T-cell (primary cell): ENCODE measurements at regions of chr6 and their contacts with region 1.

Region 1: DNA sequence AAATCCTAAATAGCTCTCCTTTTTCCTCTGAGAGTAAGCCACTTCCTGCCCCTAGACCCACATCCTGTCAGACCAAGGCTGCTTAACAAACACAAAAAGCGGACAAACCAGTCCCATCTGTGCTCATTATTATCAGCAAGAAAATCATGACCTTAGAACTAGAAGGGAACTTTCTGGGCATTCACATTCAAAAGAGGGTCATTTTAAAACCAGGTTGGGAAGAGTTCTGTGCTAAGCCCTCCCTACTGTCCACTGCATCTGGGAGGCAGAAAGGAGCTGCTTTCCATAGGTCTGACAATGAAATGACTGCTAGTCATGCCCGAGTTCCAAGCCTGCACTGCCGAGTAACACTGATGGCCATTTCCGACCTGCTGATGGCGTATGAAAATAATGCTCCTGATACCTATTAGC is 15.4 kb downstream of the EZR start:
- DNase-seq: peak in 29 of 35 experiments; percentile 19 to 72 (median 41)
- ATAC-seq: peak; percentile 43 to 86 (median 78)
- H3K4me3 ChIP-seq: peak overlapping the region in 1 of 2 donors; percentile 31
- H3K4me3 Mint-ChIP-seq: peak overlapping the region; percentile 70 to 79 (median 76)
- H3K27ac ChIP-seq: peak overlapping the region; percentile 78
- H3K27ac Mint-ChIP-seq: peak overlapping the region; percentile 90 to 91
- H3K4me1 ChIP-seq: peaks cover 35 to 72% of the 10 kb centered on the region in 2 experiments
- H3K4me1 Mint-ChIP-seq: peaks cover 93 to 100% (median 96%) of the 10 kb centered on the region in 3 donors
- H3K27me3 ChIP-seq: no peaks in the 10 kb centered on the region
- H3K27me3 Mint-ChIP-seq: no peaks in the 10 kb centered on the region

Region 2: DNA sequence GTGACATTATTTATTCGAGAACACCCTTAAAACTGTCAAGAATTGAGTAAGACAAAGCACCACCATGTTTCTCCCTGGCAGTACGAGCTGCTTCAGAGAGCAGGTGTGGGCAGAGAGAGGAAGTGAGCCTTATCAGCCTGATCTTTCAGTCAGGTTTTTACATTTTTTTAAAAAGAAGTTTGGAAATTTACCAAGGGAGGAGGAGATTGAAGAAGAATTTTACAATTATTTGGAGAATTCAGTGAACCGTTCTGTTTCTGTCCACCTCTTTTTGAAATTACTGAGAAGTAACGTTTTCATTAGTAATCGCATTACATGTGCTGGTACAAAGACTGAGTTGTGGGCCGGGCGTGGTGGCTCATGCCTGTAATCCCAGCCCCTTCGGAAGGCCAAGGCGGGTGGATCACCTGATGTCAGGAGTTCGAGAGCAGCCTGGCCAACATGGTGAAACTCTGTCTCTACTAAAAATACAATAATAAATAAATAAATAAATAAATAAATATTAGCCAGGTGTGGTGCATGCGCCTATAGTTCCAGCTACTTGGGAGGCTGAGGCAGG is 1347.1 kb before region 1 on chr6:
- CTCF ChIA-PET with region 1: no interaction called
- POLR2A ChIA-PET with region 1: no interaction called
- DNase-seq: peak in 4 of 35 experiments; percentile 6 to 27 (median 11)
- ATAC-seq: peak in 2 of 4 experiments; percentile 55 to 58
- H3K4me3 ChIP-seq: no peak overlapping the region
- H3K4me3 Mint-ChIP-seq: peak overlapping the region in 1 of 3 donors; percentile 53
- H3K27ac ChIP-seq: no peak overlapping the region
- H3K27ac Mint-ChIP-seq: no peak overlapping the region
- H3K4me1 ChIP-seq: peaks cover 7 to 24% of the 10 kb centered on the region in 2 experiments
- H3K4me1 Mint-ChIP-seq: peaks cover 15 to 28% (median 21%) of the 10 kb centered on the region in 3 donors
- H3K27me3 ChIP-seq: no peaks in the 10 kb centered on the region
- H3K27me3 Mint-ChIP-seq: no peaks in the 10 kb centered on the region

Region 3: GRCh38 chr6:157908369-157909281 is 895.1 kb before region 1 on chr6:
- CTCF ChIA-PET with region 1: no interaction called
- POLR2A ChIA-PET with region 1: no interaction called
- DNase-seq: no peak
- ATAC-seq: peak in 1 of 4 experiments; percentile 9
- H3K4me3 ChIP-seq: no peak overlapping the region
- H3K4me3 Mint-ChIP-seq: no peak overlapping the region
- H3K27ac ChIP-seq: no peak overlapping the region
- H3K27ac Mint-ChIP-seq: no peak overlapping the region
- H3K4me1 ChIP-seq: no peaks in the 10 kb centered on the region
- H3K4me1 Mint-ChIP-seq: peaks cover 3 to 10% (median 7%) of the 10 kb centered on the region in 3 donors
- H3K27me3 ChIP-seq: no peaks in the 10 kb centered on the region
- H3K27me3 Mint-ChIP-seq: no peaks in the 10 kb centered on the region

Region 4: GRCh38 chr6:158697811-158698210 is 105.9 kb before region 1 on chr6:
- CTCF ChIA-PET with region 1: interaction called in 1 of 2 experiments, 4 read pairs
- POLR2A ChIA-PET with region 1: interaction called in 1 of 2 experiments, 10 read pairs
- DNase-seq: no peak
- ATAC-seq: no peak
- H3K4me3 ChIP-seq: no peak overlapping the region
- H3K4me3 Mint-ChIP-seq: no peak overlapping the region
- H3K27ac ChIP-seq: no peak overlapping the region
- H3K27ac Mint-ChIP-seq: no peak overlapping the region
- H3K4me1 ChIP-seq: peaks cover 0 to 6% of the 10 kb centered on the region in 2 experiments
- H3K4me1 Mint-ChIP-seq: peaks cover 0 to 10% (median 5%) of the 10 kb centered on the region in 3 donors
- H3K27me3 ChIP-seq: no peaks in the 10 kb centered on the region
- H3K27me3 Mint-ChIP-seq: no peaks in the 10 kb centered on the region

Region 5: DNA sequence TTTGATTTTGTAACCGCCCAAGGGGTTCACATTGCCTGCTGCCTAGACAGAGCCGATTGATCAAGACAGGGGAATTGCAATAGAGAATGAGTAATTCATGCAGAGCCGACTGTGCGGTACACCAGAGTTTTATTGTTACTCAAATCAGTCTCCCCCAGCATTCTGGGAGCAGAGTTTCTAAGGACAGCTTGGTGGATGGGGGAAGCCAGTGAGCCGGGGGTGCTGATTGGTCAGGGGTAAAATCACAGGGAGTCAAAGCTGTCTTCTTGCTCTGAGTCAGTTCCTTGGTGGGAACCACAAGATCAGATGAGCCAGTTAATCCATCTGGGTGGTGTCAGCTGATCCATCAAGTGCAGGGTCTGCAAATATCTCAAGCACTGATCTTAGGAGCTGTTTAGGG is 75.4 kb after region 1 on chr6:
- CTCF ChIA-PET with region 1: no interaction called
- POLR2A ChIA-PET with region 1: interaction called in 1 of 2 experiments, 11 read pairs
- DNase-seq: no peak
- ATAC-seq: no peak
- H3K4me3 ChIP-seq: no peak overlapping the region
- H3K4me3 Mint-ChIP-seq: no peak overlapping the region
- H3K27ac ChIP-seq: no peak overlapping the region
- H3K27ac Mint-ChIP-seq: peak overlapping the region in 1 of 2 donors; percentile 21
- H3K4me1 ChIP-seq: no peaks in the 10 kb centered on the region
- H3K4me1 Mint-ChIP-seq: peaks cover 0 to 8% (median 6%) of the 10 kb centered on the region in 3 donors
- H3K27me3 ChIP-seq: no peaks in the 10 kb centered on the region
- H3K27me3 Mint-ChIP-seq: no peaks in the 10 kb centered on the region